A673 (cell line): ENCODE measurements at regions of chr18 and their contacts with region 1.

Region 1: DNA sequence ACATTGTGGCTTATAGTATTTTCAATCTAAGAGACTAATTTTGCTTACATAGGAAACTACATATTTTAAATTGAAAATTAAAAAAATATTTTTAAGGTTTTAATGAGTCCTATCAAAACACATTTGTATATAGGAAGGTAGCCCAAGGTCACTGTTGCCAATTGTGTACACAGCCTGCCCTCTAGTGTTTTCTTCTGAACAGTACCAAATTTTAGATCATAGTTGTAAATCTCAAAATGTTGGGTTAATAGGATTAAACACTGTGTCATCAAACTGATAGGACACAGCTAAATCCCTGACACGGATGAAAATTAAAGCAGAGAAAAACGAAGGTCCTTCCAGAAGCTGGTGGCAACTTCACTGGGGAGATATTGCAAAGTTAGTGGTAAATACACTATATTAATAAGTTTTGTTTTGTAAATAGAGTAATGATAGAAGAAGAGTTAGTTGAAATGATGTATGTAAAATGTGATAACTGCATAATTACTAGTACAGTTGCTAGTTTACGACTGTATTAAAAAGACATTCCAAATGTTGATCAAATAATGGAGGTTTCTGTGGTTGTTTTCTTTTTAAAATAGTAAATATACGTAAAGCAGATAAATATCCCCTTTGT is 19.7 kb downstream of the CLUL1 start:
- DNase-seq: peak; percentile 89
- H3K4me3 ChIP-seq: peak overlapping the region; percentile 1
- H3K27ac ChIP-seq: no peak overlapping the region
- H3K4me1 ChIP-seq: peaks cover 39% of the 10 kb centered on the region
- H3K27me3 ChIP-seq: no peaks in the 10 kb centered on the region
- CTCF ChIP-seq: peak; percentile 83

Region 2: GRCh38 chr18:286515-287310 is 329.8 kb before region 1 on chr18:
- CTCF ChIA-PET with region 1: no interaction called
- POLR2A ChIA-PET with region 1: no interaction called
- intact Hi-C with region 1: loop called (anchors 1 kb)
- DNase-seq: peak; percentile 43
- H3K4me3 ChIP-seq: no peak overlapping the region
- H3K27ac ChIP-seq: no peak overlapping the region
- H3K4me1 ChIP-seq: no peaks in the 10 kb centered on the region
- H3K27me3 ChIP-seq: no peaks in the 10 kb centered on the region
- CTCF ChIP-seq: peak; percentile 65

Region 3: GRCh38 chr18:389658-390357 is 226.7 kb before region 1 on chr18:
- CTCF ChIA-PET with region 1: no interaction called
- POLR2A ChIA-PET with region 1: no interaction called
- intact Hi-C with region 1: no loop called
- DNase-seq: no peak
- H3K4me3 ChIP-seq: no peak overlapping the region
- H3K27ac ChIP-seq: no peak overlapping the region
- H3K4me1 ChIP-seq: peaks cover 12% of the 10 kb centered on the region
- H3K27me3 ChIP-seq: no peaks in the 10 kb centered on the region
- CTCF ChIP-seq: no peak

Region 4: GRCh38 chr18:407626-408224 is 208.8 kb before region 1 on chr18:
- CTCF ChIA-PET with region 1: no interaction called
- POLR2A ChIA-PET with region 1: no interaction called
- intact Hi-C with region 1: no loop called
- DNase-seq: peak; percentile 33
- H3K4me3 ChIP-seq: no peak overlapping the region
- H3K27ac ChIP-seq: no peak overlapping the region
- H3K4me1 ChIP-seq: peaks cover 15% of the 10 kb centered on the region
- H3K27me3 ChIP-seq: no peaks in the 10 kb centered on the region
- CTCF ChIP-seq: no peak

Region 5: GRCh38 chr18:499551-500408 is 116.7 kb before region 1 on chr18:
- CTCF ChIA-PET with region 1: no interaction called
- POLR2A ChIA-PET with region 1: no interaction called
- intact Hi-C with region 1: loop called (anchors 10 kb)
- DNase-seq: peak; percentile 52
- H3K4me3 ChIP-seq: peak overlapping the region; percentile 46
- H3K27ac ChIP-seq: no peak overlapping the region
- H3K4me1 ChIP-seq: peaks cover 10% of the 10 kb centered on the region
- H3K27me3 ChIP-seq: peaks cover 30% of the 10 kb centered on the region
- CTCF ChIP-seq: 0 out of 2 replicates have a peak, but pooled peaks have one; percentile 13